Dendritic cell treated with granulocyte-macrophage colony-stimulating factor and Interleukin-4, amounts not matched to agents 40 ng/mL and 50 ng/mL, for 4 days (primary cell): ENCODE measurements at regions of chr1 and their contacts with region 1.

Region 1: GRCh38 chr1:51578383-51579082 is 38.4 kb upstream of the OSBPL9 start:
- H3K4me3 Mint-ChIP-seq: peak overlapping the region; percentile 23
- H3K27ac Mint-ChIP-seq: peak overlapping the region; percentile 85
- H3K4me1 Mint-ChIP-seq: peaks cover 40% of the 10 kb centered on the region
- H3K27me3 Mint-ChIP-seq: no peaks in the 10 kb centered on the region

Region 2: DNA sequence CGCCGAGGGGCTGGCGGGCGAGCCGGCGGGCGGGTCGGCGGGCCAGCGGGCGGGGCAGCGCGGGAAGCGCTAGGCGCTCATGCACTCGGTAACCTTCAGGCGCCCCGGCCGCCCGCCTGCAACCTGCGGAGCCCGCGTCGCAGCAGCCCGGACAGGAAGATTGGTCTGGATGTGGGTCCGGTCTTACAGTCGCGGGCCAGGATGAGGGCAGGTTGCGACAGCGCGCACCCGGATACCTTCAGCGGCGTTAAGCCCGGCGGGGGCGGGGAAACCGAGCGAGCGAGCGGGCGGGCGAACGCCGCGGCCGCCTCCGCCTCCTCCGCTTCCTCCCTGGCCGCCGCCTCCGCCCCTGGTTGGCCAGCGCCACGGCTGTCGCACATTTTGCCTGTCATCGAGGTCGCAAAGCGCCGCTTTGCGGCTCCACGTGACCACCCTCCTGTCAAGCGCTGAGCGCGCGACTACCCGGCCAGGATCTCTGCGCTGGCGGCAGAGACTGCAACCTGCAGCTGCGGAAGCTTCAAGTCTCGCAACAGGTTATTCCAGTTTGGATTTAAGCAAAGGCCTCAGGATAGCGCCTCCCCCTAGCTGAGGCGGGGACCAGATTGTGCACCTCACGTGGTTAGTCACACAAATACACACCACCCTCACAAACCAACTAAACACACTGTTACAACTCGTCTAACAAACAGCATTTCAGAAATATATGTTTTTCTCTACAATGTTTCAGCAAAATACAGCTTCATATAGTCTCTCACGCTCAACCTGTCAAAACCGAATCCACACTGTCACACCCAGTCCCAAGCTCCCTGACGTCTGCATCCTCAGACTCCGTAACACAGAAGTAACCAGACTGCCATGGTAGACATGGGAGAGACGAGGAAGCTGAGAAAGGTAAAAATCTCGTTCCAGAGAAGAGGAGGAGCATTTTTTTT is 618.4 kb before region 1 on chr1 and contains the start of gene FAF1:
- intact Hi-C with region 1: no loop called
- H3K4me3 Mint-ChIP-seq: peak within 1 kb of the TSS; percentile 81
- H3K27ac Mint-ChIP-seq: peak within 1 kb of the TSS; percentile 72
- H3K4me1 Mint-ChIP-seq: peaks cover 23% of the 10 kb centered on the region
- H3K27me3 Mint-ChIP-seq: no peaks in the 10 kb centered on the region

Region 3: GRCh38 chr1:51616901-51617708 is 38.6 kb after region 1 on chr1 and contains the start of gene OSBPL9:
- intact Hi-C with region 1: loop called (anchors 1 kb)
- H3K4me3 Mint-ChIP-seq: peak within 1 kb of the TSS; percentile 99
- H3K27ac Mint-ChIP-seq: peak within 1 kb of the TSS; percentile 93
- H3K4me1 Mint-ChIP-seq: peaks cover 42% of the 10 kb centered on the region
- H3K27me3 Mint-ChIP-seq: no peaks in the 10 kb centered on the region